ENCODE measurements at regions of chr19 and their contacts with region 1.

Region 1: GRCh38 chr19:662962-663681 is at the start of gene RNF126:
- DNase-seq: peak; percentile 82 to 96 (median 90)
- ATAC-seq: peak; percentile 35 to 47
- H3K4me3 Mint-ChIP-seq: peak within 1 kb of the TSS; percentile 96 to 99 (median 97)
- H3K27ac Mint-ChIP-seq: peak within 1 kb of the TSS; percentile 90 to 98 (median 97)
- H3K4me1 Mint-ChIP-seq: peaks cover 17 to 46% (median 40%) of the 10 kb centered on the region in 4 donors
- H3K27me3 Mint-ChIP-seq: no peaks in the 10 kb centered on the region
- polyA plus RNA-seq, gene RNF126: 56.2 to 70.7 (median 61.0) TPM

Region 2: GRCh38 chr19:506404-507285 is 156.5 kb before region 1 on chr19:
- POLR2A ChIA-PET with region 1: interaction called, 11 read pairs
- DNase-seq: peak; percentile 87 to 99 (median 94)
- ATAC-seq: peak; percentile 53 to 56
- H3K4me3 Mint-ChIP-seq: peak overlapping the region; percentile 88 to 100 (median 98)
- H3K27ac Mint-ChIP-seq: peak overlapping the region; percentile 95 to 100 (median 99)
- H3K4me1 Mint-ChIP-seq: peaks cover 18 to 52% (median 38%) of the 10 kb centered on the region in 4 donors
- H3K27me3 Mint-ChIP-seq: no peaks in the 10 kb centered on the region

Region 3: DNA sequence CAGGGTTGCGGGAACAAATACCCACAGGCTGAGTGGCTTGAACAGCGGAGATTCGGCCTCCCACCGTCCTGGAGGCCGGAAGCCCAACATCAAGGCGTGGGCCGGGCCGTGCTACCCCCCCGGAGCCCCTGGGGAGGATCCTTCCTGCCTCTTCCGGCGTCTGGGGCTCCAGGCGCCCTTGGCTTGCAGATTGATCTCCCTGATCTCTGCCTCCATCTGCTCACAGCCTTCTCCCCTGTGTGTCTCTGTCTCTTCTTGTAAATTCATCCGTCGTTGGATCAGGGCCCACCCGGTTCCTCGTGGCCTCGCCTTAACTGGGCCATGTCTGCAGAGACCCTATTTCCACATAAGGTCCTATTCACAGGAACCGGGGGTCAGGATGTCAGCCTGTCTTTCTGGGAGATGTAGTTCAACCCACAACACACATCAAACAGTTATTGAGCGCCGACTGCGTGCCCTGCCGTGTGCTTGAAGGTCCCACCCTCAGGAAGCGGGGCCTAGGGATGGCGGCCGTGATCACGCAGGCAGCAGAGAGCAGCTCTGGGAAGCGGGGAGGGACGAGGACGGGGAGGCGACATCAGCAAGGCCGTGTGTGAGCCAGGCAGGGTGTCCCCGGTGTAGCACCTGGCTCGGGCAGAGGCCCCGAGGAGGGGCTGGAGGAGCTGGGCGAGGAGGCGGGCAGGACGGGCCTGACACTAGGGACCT is 52.2 kb before region 1 on chr19:
- POLR2A ChIA-PET with region 1: interaction called, 10 read pairs
- DNase-seq: peak; percentile 41 to 81 (median 57)
- ATAC-seq: peak; percentile 70 to 71
- H3K4me3 Mint-ChIP-seq: peak overlapping the region; percentile 81 to 99 (median 95)
- H3K27ac Mint-ChIP-seq: peak overlapping the region; percentile 81 to 99 (median 94)
- H3K4me1 Mint-ChIP-seq: peaks cover 11 to 26% (median 19%) of the 10 kb centered on the region in 4 donors
- H3K27me3 Mint-ChIP-seq: peaks cover 0 to 4% (median 0%) of the 10 kb centered on the region in 5 donors

Region 4: DNA sequence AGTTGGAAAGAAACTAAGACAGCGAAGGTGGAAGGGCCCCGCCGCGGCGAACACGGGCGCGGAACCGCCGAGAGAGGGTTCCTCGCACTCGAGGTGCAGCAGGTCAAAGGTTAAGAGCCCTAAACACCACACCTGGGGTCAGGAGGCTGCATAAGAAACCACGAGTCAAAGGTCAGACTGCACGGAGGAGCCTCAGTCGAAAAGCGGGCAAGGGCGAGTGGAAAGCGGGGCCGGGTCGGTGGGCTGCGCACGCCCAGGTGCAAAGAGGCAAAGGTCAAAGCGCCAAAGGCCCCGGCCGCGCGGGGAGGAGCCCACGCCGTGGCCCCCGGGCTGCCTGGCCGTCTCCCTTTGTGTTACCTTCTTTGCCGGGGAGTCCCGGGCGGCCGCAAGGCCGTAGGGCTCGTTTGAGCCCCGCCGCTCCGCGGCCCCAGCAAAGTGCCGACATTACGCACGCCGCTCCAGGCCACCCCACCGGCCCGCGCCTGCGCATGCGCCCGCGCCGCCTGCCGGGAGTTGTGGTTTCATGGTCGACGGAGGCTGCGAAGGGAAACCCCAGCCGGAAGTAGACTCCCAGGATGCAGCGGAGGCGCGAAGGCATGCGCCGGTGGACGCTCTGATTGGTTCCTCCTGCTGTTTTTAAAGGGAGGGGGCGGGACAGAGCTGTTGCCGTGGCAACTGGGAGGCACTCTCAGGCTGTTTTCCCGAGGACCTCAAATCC is 29.9 kb before region 1 on chr19 and contains the start of gene POLRMT:
- POLR2A ChIA-PET with region 1: interaction called, 19 read pairs
- DNase-seq: peak; percentile 91 to 98 (median 95)
- ATAC-seq: peak; percentile 97
- H3K4me3 Mint-ChIP-seq: peak within 1 kb of the TSS; percentile 90 to 98 (median 96)
- H3K27ac Mint-ChIP-seq: peak within 1 kb of the TSS; percentile 86 to 97 (median 95)
- H3K4me1 Mint-ChIP-seq: peaks cover 13 to 40% (median 32%) of the 10 kb centered on the region in 4 donors
- H3K27me3 Mint-ChIP-seq: no peaks in the 10 kb centered on the region
- polyA plus RNA-seq, gene POLRMT: 33.2 to 71.1 (median 37.4) TPM

Region 5: DNA sequence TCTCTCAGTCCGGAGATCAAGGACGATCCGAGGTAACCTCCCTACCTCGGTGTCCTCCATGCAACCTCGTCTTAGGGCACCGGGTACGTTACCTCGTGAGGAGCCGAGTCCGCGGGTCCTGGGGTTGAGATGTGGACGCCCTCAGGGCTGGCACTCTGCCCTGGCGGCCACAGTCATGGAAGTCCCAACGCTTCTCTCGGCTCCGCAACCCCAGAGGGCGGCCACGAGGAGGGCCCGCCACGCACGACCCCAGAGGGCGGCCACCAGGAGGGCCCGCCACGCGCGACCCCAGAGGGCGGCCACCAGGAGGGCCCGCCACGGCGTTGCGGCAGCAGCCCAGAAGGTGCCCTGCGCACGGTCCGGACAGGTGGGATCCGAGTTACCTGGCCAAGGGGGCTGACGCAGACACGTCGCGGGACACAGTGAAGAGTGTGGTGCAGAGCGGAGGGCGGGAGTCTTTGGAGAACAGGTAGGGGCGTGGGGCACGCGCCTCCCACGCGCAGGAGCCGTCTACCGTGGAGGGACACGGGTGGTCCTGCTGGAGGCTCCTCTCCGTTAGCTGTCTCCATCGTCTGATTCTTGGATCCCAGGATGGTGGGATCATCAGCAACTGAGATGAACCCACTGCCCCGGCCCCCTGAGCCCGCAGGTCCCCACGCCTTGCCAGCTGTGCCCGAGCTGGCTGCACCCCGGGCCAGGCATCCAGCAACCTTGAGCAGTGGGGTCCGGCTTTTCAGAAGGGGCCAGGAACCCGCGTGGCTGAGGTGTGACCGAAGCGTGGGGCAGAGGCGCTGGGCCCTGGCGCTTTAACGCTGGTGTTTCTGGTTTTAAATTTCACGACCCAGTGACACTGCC is 16.4 kb before region 1 on chr19:
- POLR2A ChIA-PET with region 1: interaction called, 12 read pairs
- DNase-seq: no peak
- ATAC-seq: no peak
- H3K4me3 Mint-ChIP-seq: no peak overlapping the region
- H3K27ac Mint-ChIP-seq: peak overlapping the region in 1 of 10 donors; percentile 57
- H3K4me1 Mint-ChIP-seq: no peaks in the 10 kb centered on the region
- H3K27me3 Mint-ChIP-seq: no peaks in the 10 kb centered on the region

Region 6: DNA sequence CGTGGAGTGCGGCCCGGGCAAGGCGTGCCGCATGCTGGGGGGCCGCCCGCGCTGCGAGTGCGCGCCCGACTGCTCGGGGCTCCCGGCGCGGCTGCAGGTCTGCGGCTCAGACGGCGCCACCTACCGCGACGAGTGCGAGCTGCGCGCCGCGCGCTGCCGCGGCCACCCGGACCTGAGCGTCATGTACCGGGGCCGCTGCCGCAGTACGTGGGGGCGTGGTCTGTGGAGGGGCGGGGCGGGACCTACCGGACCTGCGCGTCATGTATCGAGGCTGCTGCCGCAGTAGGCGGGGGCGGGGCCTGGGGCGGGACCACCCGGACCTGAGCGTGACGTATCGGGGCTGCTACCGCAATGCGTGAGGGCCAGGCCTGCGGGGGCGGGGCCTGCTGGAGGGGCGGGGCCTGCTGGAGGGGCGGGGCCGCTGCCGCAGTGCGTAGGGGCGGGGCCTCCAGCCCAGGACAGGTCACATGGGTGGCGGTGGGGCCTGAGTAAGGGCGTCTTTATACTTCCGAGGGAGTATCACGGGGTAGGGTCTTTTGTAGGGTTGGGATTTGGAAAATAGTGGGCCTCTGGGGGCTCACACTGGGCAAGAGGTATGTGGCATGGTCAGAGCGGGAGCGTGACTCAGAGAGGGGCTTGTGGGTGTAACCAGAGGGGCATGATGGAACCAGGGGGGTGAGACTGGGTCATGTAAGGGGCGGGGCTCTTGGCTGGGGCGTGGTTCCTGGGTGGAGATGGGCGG is 17.3 kb after region 1 on chr19:
- POLR2A ChIA-PET with region 1: interaction called, 15 read pairs
- DNase-seq: peak; percentile 97 to 100 (median 100)
- ATAC-seq: peak; percentile 79 to 80
- H3K4me3 Mint-ChIP-seq: peak overlapping the region; percentile 75 to 99 (median 96)
- H3K27ac Mint-ChIP-seq: peak overlapping the region; percentile 86 to 99 (median 98)
- H3K4me1 Mint-ChIP-seq: peaks cover 0 to 15% (median 5%) of the 10 kb centered on the region in 4 donors
- H3K27me3 Mint-ChIP-seq: peaks cover under 1 to 8% (median 1%) of the 10 kb centered on the region in 5 donors

Region 7: GRCh38 chr19:732148-733069 is 69.3 kb after region 1 on chr19:
- POLR2A ChIA-PET with region 1: interaction called, 13 read pairs
- DNase-seq: no peak
- ATAC-seq: no peak
- H3K4me3 Mint-ChIP-seq: no peak overlapping the region
- H3K27ac Mint-ChIP-seq: no peak overlapping the region
- H3K4me1 Mint-ChIP-seq: peaks cover 9 to 14% (median 10%) of the 10 kb centered on the region in 4 donors
- H3K27me3 Mint-ChIP-seq: peaks cover 0 to 9% (median 3%) of the 10 kb centered on the region in 5 donors

Measured in naive thymus-derived CD8-positive, alpha-beta T cell (primary cell).